ENCODE measurements at regions of chr19 and their contacts with region 1.

Region 1: DNA sequence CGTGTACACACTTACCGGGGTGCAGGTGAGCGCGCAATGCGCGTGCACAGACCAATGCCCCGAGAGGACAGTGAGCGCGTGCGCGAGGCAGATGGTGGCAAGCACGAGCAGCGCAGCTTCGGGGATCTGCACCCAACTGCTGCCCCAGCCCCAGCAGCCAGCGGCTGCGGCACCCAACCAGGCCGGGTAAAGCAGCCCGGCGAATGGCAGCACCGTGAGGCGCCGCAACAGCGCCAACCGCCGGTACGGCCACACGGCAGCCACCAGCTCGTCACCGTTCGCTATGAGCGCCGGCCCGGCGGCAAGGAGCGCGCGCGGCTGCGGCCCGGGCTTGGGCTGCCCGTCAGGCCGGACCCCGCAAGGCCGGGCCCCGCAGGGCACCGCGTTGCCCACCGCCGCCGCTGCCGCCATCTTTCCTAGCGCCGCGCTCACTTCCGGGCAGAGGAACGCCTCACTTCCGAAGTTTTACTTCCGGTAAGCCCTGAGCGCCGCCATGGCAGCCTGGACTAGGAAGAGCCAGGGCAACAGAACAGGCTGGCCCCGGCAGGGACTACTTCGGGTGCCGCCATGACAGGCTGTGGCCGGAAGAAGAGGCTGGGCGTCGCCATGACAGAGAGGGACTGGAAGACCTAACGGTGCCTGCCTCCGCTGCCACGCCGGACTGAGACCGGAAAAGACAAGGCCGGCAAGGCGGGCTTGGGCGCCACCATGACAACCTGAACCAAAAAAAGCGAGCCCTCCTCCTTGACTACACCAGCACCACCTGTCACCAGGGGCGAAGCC is at the start of gene ATP13A1:
- DNase-seq: peak; percentile 81 to 98 (median 93)
- ATAC-seq: peak; percentile 73 to 76
- H3K4me3 Mint-ChIP-seq: peak within 1 kb of the TSS; percentile 83 to 97 (median 94)
- H3K27ac Mint-ChIP-seq: peak within 1 kb of the TSS; percentile 93 to 100 (median 98)
- H3K4me1 Mint-ChIP-seq: peaks cover 23 to 50% (median 40%) of the 10 kb centered on the region in 4 donors
- H3K27me3 Mint-ChIP-seq: peaks cover 0 to 3% (median 0%) of the 10 kb centered on the region in 5 donors
- polyA plus RNA-seq, gene ATP13A1: 15.3 to 46.7 (median 20.7) TPM

Region 2: DNA sequence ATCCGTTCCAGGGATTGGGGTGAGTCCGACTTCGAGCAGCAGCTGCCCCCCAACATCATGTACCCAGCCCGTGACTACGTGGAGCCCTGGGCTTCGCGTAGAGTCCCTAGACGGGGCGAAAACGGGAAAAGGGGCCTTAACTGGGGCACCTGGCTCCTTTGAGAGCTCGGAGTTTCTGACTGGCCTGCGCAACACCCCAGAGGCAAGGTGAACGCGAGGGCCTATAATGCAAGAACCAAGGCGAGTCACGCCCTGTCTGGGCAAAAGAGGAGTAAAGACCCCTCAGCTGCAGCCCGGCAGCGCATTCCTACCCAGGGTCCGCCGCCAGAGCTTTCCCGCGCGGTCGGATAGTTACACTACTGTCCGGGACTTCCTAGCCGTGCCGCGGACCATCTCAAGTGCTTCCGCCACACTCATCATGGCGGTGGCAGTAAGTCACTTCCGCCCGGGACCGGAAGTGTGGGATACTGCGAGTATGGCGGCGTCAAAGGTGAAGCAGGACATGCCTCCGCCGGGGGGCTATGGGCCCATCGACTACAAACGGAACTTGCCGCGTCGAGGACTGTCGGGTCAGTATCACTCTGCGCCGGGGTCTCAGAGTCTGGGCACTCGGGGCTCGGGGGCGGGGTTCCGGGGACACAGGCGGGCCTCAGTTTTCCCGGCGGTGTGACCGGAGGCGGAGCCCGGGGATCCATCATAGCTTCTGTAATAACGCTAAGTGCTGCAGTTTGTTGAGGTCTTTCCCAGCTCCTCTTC is 147.5 kb before region 1 on chr19 and contains the start of gene NDUFA13:
- POLR2A ChIA-PET with region 1: interaction called, 18 read pairs
- DNase-seq: peak; percentile 84 to 99 (median 93)
- ATAC-seq: peak; percentile 86 to 90
- H3K4me3 Mint-ChIP-seq: peak within 1 kb of the TSS; percentile 91 to 98 (median 96)
- H3K27ac Mint-ChIP-seq: peak within 1 kb of the TSS; percentile 91 to 98 (median 97)
- H3K4me1 Mint-ChIP-seq: peaks cover 10 to 51% (median 30%) of the 10 kb centered on the region in 4 donors
- H3K27me3 Mint-ChIP-seq: no peaks in the 10 kb centered on the region
- polyA plus RNA-seq, gene NDUFA13: 329 to 360 (median 338) TPM

Region 3: DNA sequence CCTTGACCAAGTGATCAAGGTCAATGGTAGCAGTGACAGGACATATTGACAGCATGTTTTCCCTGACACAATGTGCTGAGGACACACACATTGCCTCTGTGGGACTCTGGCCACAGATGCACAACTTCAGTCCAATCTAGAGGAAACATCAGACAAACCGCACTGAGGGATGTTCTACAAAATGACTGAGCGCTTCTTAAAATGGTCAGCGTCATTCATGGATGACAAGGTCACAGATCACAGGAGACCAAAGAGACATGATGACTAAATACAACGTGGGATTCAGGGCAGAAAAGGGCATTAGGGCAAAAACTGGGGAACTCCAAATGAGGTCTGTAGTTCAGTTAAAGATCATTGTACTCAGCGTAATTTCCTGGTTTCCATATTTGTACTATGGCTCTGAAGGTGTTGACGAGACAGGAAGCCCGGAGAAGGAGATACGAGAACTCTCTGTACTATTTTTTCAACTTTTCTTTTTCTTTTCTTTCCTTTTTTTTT is 65.6 kb before region 1 on chr19:
- POLR2A ChIA-PET with region 1: interaction called, 35 read pairs
- DNase-seq: peak in 8 of 10 donors; percentile 62 to 87 (median 76)
- ATAC-seq: peak; percentile 69 to 81
- H3K4me3 Mint-ChIP-seq: peak overlapping the region; percentile 62 to 87 (median 80)
- H3K27ac Mint-ChIP-seq: peak overlapping the region; percentile 90 to 99 (median 98)
- H3K4me1 Mint-ChIP-seq: peaks cover 26 to 76% (median 57%) of the 10 kb centered on the region in 4 donors
- H3K27me3 Mint-ChIP-seq: no peaks in the 10 kb centered on the region

Region 4: GRCh38 chr19:19634516-19635312 is 28.7 kb before region 1 on chr19:
- POLR2A ChIA-PET with region 1: interaction called, 47 read pairs
- DNase-seq: peak in 1 of 10 donors; percentile 52
- ATAC-seq: no peak
- H3K4me3 Mint-ChIP-seq: peak overlapping the region in 2 of 10 donors; percentile 34 to 36
- H3K27ac Mint-ChIP-seq: peak overlapping the region in 9 of 10 donors; percentile 8 to 83 (median 68)
- H3K4me1 Mint-ChIP-seq: peaks cover 6 to 32% (median 16%) of the 10 kb centered on the region in 4 donors
- H3K27me3 Mint-ChIP-seq: no peaks in the 10 kb centered on the region

Region 5: GRCh38 chr19:19686580-19686979 is 23.1 kb after region 1 on chr19:
- POLR2A ChIA-PET with region 1: interaction called, 60 read pairs
- DNase-seq: no peak
- ATAC-seq: peak in 1 of 2 donors; percentile 37
- H3K4me3 Mint-ChIP-seq: peak overlapping the region in 1 of 10 donors; percentile 1
- H3K27ac Mint-ChIP-seq: peak overlapping the region in 3 of 10 donors; percentile 17 to 75 (median 19)
- H3K4me1 Mint-ChIP-seq: peaks cover 0 to 3% (median under 1%) of the 10 kb centered on the region in 4 donors
- H3K27me3 Mint-ChIP-seq: no peaks in the 10 kb centered on the region

Region 6: GRCh38 chr19:19776041-19777008 is 112.9 kb after region 1 on chr19:
- POLR2A ChIA-PET with region 1: interaction called, 68 read pairs
- DNase-seq: peak; percentile 80 to 94 (median 91)
- ATAC-seq: peak; percentile 97 to 98
- H3K4me3 Mint-ChIP-seq: peak overlapping the region; percentile 94 to 100 (median 99)
- H3K27ac Mint-ChIP-seq: peak overlapping the region; percentile 95 to 99 (median 96)
- H3K4me1 Mint-ChIP-seq: peaks cover 21 to 65% (median 58%) of the 10 kb centered on the region in 4 donors
- H3K27me3 Mint-ChIP-seq: no peaks in the 10 kb centered on the region

Region 7: GRCh38 chr19:19900729-19901444 is 237.4 kb after region 1 on chr19 and contains the start of gene ZNF93:
- POLR2A ChIA-PET with region 1: interaction called, 38 read pairs
- DNase-seq: peak; percentile 68 to 96 (median 91)
- ATAC-seq: peak; percentile 95 to 97
- H3K4me3 Mint-ChIP-seq: peak within 1 kb of the TSS; percentile 92 to 100 (median 96)
- H3K27ac Mint-ChIP-seq: peak within 1 kb of the TSS; percentile 80 to 98 (median 95)
- H3K4me1 Mint-ChIP-seq: peaks cover 20 to 39% (median 34%) of the 10 kb centered on the region in 4 donors
- H3K27me3 Mint-ChIP-seq: no peaks in the 10 kb centered on the region
- polyA plus RNA-seq, gene ZNF93: 7.7 to 11.5 (median 11.2) TPM

Measured in naive thymus-derived CD8-positive, alpha-beta T cell (primary cell).